Activated B cell treated with CpG ODN at 0.5 μM for 24 hours (primary cell): ENCODE measurements at regions of chr11 and their contacts with region 1.

Region 1: GRCh38 chr11:63838678-63839507 is at the start of gene MARK2:
- DNase-seq: peak; percentile 100
- ATAC-seq: peak; percentile 84
- H3K4me3 Mint-ChIP-seq: peak within 1 kb of the TSS; percentile 95
- H3K27ac Mint-ChIP-seq: peak within 1 kb of the TSS; percentile 89
- H3K4me1 Mint-ChIP-seq: peaks cover 62% of the 10 kb centered on the region
- H3K27me3 Mint-ChIP-seq: no peaks in the 10 kb centered on the region
- CTCF ChIP-seq: no peak
- total RNA-seq, gene MARK2: 39.2 and 41.5 TPM in 2 replicates

Region 2: DNA sequence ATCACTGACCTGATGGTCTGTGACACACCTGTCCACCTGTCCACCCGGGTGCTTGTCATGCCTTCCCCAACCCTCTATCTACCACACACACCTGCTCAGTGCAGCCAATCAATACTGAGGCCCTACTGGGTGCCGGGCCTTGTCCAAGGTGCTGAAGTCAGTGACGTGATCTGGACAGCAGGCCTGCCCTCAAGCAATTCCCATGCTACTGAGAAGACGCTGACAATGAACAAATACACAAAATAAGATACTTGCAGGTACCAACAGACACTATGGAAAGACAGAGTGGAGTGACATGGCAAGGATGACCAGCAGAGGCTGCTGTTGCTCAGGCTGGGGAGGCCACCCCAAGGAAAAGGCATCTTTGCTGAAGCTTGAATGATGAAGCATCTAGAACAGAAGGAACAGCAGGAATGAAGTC is 245.9 kb before region 1 on chr11:
- CTCF ChIA-PET with region 1: no interaction called
- POLR2A ChIA-PET with region 1: no interaction called
- intact Hi-C with region 1: no loop called
- DNase-seq: no peak
- ATAC-seq: no peak
- H3K4me3 Mint-ChIP-seq: no peak overlapping the region
- H3K27ac Mint-ChIP-seq: no peak overlapping the region
- H3K4me1 Mint-ChIP-seq: no peaks in the 10 kb centered on the region
- H3K27me3 Mint-ChIP-seq: no peaks in the 10 kb centered on the region
- CTCF ChIP-seq: no peak

Region 3: GRCh38 chr11:63768237-63769043 is 70.5 kb before region 1 on chr11 and contains the start of gene ZFTA:
- CTCF ChIA-PET with region 1: interaction called, 17 read pairs
- POLR2A ChIA-PET with region 1: interaction called, 21 read pairs
- intact Hi-C with region 1: loop called (anchors 2 kb)
- DNase-seq: peak; percentile 80
- ATAC-seq: peak; percentile 68
- H3K4me3 Mint-ChIP-seq: peak within 1 kb of the TSS; percentile 94
- H3K27ac Mint-ChIP-seq: peak within 1 kb of the TSS; percentile 83
- H3K4me1 Mint-ChIP-seq: peaks cover 11% of the 10 kb centered on the region
- H3K27me3 Mint-ChIP-seq: peaks cover 4% of the 10 kb centered on the region
- CTCF ChIP-seq: no peak
- total RNA-seq, gene ZFTA: 11.2 and 12.5 TPM in 2 replicates

Region 4: GRCh38 chr11:63888170-63889086 is 49.5 kb after region 1 on chr11:
- CTCF ChIA-PET with region 1: interaction called, 8 read pairs
- POLR2A ChIA-PET with region 1: interaction called, 10 read pairs
- intact Hi-C with region 1: loop called (anchors 1 kb)
- DNase-seq: peak; percentile 44
- ATAC-seq: peak; percentile 89
- H3K4me3 Mint-ChIP-seq: peak overlapping the region; percentile 87
- H3K27ac Mint-ChIP-seq: peak overlapping the region; percentile 92
- H3K4me1 Mint-ChIP-seq: peaks cover 78% of the 10 kb centered on the region
- H3K27me3 Mint-ChIP-seq: no peaks in the 10 kb centered on the region
- CTCF ChIP-seq: no peak

Region 5: GRCh38 chr11:63938479-63939396 is 99.8 kb after region 1 on chr11 and contains the start of gene NAA40:
- CTCF ChIA-PET with region 1: interaction called, 130 read pairs
- POLR2A ChIA-PET with region 1: interaction called, 10 read pairs
- intact Hi-C with region 1: loop called (anchors 1 kb)
- DNase-seq: peak; percentile 94
- ATAC-seq: peak; percentile 91
- H3K4me3 Mint-ChIP-seq: peak within 1 kb of the TSS; percentile 90
- H3K27ac Mint-ChIP-seq: peak within 1 kb of the TSS; percentile 82
- H3K4me1 Mint-ChIP-seq: peaks cover 36% of the 10 kb centered on the region
- H3K27me3 Mint-ChIP-seq: no peaks in the 10 kb centered on the region
- CTCF ChIP-seq: no peak
- total RNA-seq, gene NAA40: 28.0 and 28.6 TPM in 2 replicates

Region 6: GRCh38 chr11:63986156-63986931 is 147.5 kb after region 1 on chr11 and contains the start of gene OTUB1:
- CTCF ChIA-PET with region 1: interaction called, 3 read pairs
- POLR2A ChIA-PET with region 1: interaction called, 3 read pairs
- intact Hi-C with region 1: loop called (anchors 2 kb)
- DNase-seq: peak; percentile 80
- ATAC-seq: peak; percentile 86
- H3K4me3 Mint-ChIP-seq: peak within 1 kb of the TSS; percentile 95
- H3K27ac Mint-ChIP-seq: peak within 1 kb of the TSS; percentile 98
- H3K4me1 Mint-ChIP-seq: peaks cover 43% of the 10 kb centered on the region
- H3K27me3 Mint-ChIP-seq: no peaks in the 10 kb centered on the region
- CTCF ChIP-seq: no peak
- total RNA-seq, gene OTUB1: 87.4 and 92.5 TPM in 2 replicates

Region 7: GRCh38 chr11:64185816-64186498 is 347.1 kb after region 1 on chr11 and contains the start of gene STIP1:
- CTCF ChIA-PET with region 1: no interaction called
- POLR2A ChIA-PET with region 1: interaction called, 7 read pairs
- intact Hi-C with region 1: loop called (anchors 1 kb)
- DNase-seq: peak; percentile 93
- ATAC-seq: peak; percentile 87
- H3K4me3 Mint-ChIP-seq: no peak within 1 kb of the TSS
- H3K27ac Mint-ChIP-seq: peak within 1 kb of the TSS; percentile 97
- H3K4me1 Mint-ChIP-seq: peaks cover 27% of the 10 kb centered on the region
- H3K27me3 Mint-ChIP-seq: no peaks in the 10 kb centered on the region
- CTCF ChIP-seq: no peak
- total RNA-seq, gene STIP1: 155 and 159 TPM in 2 replicates

Region 8: DNA sequence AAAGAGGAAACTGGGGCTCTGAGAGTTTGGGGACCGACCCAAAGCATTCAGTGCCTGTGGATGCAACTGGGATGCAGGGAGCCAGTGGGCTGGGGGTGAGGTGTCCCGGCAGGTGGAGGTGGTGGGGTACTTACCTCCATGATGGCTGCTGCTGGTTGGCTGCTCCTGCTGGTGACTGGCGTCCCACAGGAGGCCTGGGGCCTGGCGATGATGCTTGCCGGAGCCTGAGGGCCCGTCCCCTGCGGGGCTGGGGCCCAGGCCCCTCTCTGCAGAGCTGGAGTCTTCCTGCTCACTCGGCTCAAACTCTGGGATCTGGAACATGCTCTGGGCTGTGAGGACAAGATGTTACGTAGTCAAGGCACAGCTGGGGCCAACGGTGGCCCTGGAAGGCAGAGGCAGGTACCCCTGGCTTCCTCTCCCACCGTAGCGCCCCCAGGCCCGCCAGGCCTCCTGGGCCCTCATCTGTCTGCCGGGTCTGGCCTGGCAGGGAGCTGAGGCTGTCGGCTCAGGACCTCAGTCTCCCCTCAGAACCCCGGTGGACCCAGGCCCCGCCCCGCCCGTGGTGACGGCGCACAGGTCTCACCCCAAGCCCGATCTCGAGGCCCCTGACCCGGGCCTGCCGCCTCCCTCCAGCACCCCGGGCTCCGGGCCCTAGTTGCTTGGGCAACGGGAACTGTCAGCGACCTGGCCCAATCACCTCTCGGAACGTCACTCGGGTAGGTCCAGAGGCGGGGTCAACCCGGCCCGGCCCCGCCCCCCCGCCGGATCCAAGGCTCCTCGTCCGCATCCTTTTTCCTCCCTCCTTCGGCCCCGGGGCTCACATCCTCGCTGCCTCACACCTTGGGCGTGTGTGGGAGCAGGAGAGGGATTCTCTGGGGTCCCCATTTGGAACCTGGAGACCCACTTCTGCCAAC is 445.4 kb after region 1 on chr11 and contains the start of gene BAD:
- CTCF ChIA-PET with region 1: no interaction called
- POLR2A ChIA-PET with region 1: no interaction called
- intact Hi-C with region 1: no loop called
- DNase-seq: peak; percentile 80
- ATAC-seq: peak; percentile 79
- H3K4me3 Mint-ChIP-seq: peak within 1 kb of the TSS; percentile 90
- H3K27ac Mint-ChIP-seq: peak within 1 kb of the TSS; percentile 92
- H3K4me1 Mint-ChIP-seq: peaks cover 20% of the 10 kb centered on the region
- H3K27me3 Mint-ChIP-seq: no peaks in the 10 kb centered on the region
- CTCF ChIP-seq: no peak
- total RNA-seq, gene BAD: 21.7 and 26.6 TPM in 2 replicates